Activated CD4-positive, alpha-beta memory T cell treated with anti-CD3 and anti-CD28 coated beads for 36 hours (primary cell): ENCODE measurements at regions of chr5 and their contacts with region 1.

Region 1: DNA sequence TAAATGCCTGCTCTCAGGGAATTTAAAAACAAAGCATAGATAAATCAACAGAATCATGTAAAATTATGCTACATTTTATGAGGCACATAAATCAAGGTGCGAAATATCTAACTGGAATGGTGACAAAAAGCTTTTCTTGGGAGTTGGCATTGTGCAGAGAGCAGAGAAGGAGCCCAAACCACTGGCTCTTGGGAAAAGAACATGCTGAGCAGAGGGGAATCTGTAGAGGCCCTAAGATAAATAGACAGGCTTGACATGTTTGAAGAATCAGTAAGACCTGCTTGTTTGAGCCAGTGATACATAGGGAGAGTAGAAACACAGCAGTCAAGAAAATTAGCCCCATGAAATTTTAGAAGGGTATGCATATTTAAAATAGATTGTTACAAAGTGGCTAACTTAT is 85.8 kb downstream of the GABRB2 start:
- DNase-seq: no peak
- H3K4me3 Mint-ChIP-seq: no peak overlapping the region
- H3K27ac Mint-ChIP-seq: no peak overlapping the region
- H3K4me1 Mint-ChIP-seq: no peaks in the 10 kb centered on the region
- H3K27me3 Mint-ChIP-seq: no peaks in the 10 kb centered on the region

Region 2: DNA sequence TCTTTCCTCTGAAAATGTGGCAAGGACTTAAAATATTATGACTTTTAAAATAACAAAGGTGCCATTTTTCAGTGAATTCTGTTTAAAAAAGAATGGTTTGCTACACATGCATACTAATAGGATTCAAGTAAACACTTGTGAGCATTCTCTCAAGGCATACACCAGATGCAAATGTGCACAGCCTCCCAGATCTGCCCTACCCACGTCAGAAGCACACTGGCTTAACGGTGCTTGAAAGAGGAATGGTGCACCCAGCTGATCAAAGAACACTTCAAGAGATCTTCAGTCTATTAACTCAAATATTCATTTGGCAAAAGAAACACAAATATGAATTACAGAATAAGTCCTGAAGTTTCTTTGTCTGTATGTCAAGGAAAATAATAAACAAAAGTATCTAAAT is 70.0 kb after region 1 on chr5:
- CTCF ChIA-PET with region 1: no interaction called
- POLR2A ChIA-PET with region 1: no interaction called
- intact Hi-C with region 1: loop called (anchors 2 kb)
- DNase-seq: no peak
- H3K4me3 Mint-ChIP-seq: no peak overlapping the region
- H3K27ac Mint-ChIP-seq: no peak overlapping the region
- H3K4me1 Mint-ChIP-seq: no peaks in the 10 kb centered on the region
- H3K27me3 Mint-ChIP-seq: no peaks in the 10 kb centered on the region